ENCODE measurements at regions of chr2 and their contacts with region 1.

Region 1: DNA sequence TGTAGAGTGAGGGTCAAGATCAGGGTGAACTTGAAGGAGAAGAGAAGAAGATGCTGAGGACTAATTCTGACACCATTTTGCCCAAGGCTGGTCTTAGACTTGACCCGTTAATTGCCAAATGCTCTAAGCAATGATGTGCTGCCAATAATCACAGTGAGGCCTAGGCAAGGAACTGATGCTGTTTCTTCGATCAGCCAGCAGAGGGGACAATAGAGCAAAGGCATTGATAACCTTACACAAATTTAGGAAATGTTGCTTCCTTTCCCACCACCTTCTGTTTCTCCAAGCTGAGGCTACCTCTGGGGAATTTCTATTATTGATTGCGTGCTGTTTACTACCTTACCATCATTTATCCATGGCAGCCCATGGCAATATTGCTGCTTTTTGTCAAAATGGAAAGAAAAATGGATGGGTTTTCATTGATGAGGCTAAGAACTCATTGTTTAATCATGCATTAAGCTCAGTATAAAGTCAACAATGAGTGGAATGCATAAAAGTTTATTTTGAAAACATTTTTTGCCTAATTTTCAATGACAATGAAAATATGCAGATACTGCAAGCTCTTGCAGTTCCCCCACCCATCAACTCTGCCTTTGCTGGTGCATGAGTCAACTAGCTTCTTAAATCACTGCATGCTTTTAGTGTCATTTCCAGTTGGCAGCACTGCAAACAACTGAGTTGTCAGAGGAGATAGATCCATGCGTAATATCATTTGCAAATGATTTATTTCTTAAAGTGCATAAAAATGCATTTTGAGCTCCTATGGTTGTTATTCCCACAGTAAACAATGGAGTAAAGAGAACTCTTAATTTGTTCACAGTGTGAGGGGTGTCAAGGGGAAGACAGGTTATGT is 116.4 kb upstream of the NYAP2 start:
- DNase-seq: no peak
- ATAC-seq: peak; percentile 69 to 77 (median 76)
- H3K4me3 ChIP-seq: no peak overlapping the region
- H3K27ac ChIP-seq: no peak overlapping the region
- H3K4me1 ChIP-seq: no peaks in the 10 kb centered on the region
- H3K27me3 ChIP-seq: no peaks in the 10 kb centered on the region
- CTCF ChIP-seq: peak; percentile 58 to 74 (median 64)
- POLR2A ChIP-seq: no peak

Region 2: DNA sequence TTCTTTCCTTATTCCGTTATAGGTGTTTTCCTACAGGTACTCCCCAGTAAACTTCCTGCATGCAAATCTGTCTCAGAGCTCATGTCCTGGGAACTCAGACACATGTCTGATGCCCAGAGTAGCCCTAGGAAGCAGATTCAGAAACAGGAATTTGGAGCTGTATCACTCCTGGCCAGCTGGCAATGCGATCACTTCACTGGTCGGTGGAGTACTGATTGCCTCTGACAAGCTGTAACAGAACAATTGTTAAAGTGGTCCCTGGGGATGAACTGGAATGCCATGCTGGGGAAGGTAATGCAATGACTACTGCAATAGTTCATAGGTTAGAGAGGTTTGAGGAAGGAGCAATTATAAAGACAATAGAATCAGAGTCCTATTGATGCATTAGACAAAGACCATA is 109.2 kb before region 1 on chr2:
- intact Hi-C with region 1: no loop called
- DNase-seq: no peak
- ATAC-seq: no peak
- H3K4me3 ChIP-seq: no peak overlapping the region
- H3K27ac ChIP-seq: no peak overlapping the region
- H3K4me1 ChIP-seq: no peaks in the 10 kb centered on the region
- H3K27me3 ChIP-seq: no peaks in the 10 kb centered on the region
- CTCF ChIP-seq: no peak
- POLR2A ChIP-seq: no peak

Region 3: DNA sequence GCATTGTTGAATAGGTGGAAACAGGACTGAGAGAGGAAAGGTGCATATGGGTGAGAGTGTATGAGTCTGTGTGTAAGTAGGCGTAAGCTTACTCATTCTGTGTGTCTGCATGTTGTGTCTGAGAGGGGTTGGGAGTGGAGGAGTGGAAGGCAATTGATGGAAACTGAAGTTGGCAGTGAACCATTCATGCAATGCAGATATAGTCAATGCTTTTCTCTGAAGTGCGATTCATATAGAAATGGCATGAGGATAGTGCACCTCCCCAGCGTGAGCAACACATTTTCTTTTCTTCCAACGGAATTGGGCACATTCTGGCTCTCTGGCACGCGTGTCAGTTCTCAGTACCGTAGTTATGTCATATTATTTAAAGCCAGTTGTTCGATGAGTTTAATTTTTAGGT is 367.0 kb after region 1 on chr2:
- intact Hi-C with region 1: loop called in 1 of 2 experiments (anchors 10 kb)
- DNase-seq: no peak
- ATAC-seq: no peak
- H3K4me3 ChIP-seq: no peak overlapping the region
- H3K27ac ChIP-seq: no peak overlapping the region
- H3K4me1 ChIP-seq: no peaks in the 10 kb centered on the region
- H3K27me3 ChIP-seq: no peaks in the 10 kb centered on the region
- CTCF ChIP-seq: no peak
- POLR2A ChIP-seq: no peak

Region 4: GRCh38 chr2:225660262-225661131 is 377.4 kb after region 1 on chr2:
- intact Hi-C with region 1: loop called (anchors 5 to 10 kb)
- DNase-seq: peak; percentile 68 to 76 (median 69)
- ATAC-seq: peak; percentile 82 to 89 (median 84)
- H3K4me3 ChIP-seq: no peak overlapping the region
- H3K27ac ChIP-seq: no peak overlapping the region
- H3K4me1 ChIP-seq: no peaks in the 10 kb centered on the region
- H3K27me3 ChIP-seq: no peaks in the 10 kb centered on the region
- CTCF ChIP-seq: peak; percentile 75 to 90 (median 87)
- POLR2A ChIP-seq: no peak

Measured in right lobe of liver (tissue), 6 donors.